Colonic mucosa (tissue), 4 donors: ENCODE measurements at regions of chr19 and their contacts with region 1.

Region 1: GRCh38 chr19:33143897-33144405 is 12.0 kb downstream of the WDR88 start:
- DNase-seq: peak; percentile 66
- H3K4me3 ChIP-seq: peak overlapping the region; percentile 4
- H3K27ac ChIP-seq: no peak overlapping the region
- H3K4me1 ChIP-seq: no peaks in the 10 kb centered on the region
- H3K27me3 ChIP-seq: no peaks in the 10 kb centered on the region
- CTCF ChIP-seq: peak; percentile 94

Region 2: DNA sequence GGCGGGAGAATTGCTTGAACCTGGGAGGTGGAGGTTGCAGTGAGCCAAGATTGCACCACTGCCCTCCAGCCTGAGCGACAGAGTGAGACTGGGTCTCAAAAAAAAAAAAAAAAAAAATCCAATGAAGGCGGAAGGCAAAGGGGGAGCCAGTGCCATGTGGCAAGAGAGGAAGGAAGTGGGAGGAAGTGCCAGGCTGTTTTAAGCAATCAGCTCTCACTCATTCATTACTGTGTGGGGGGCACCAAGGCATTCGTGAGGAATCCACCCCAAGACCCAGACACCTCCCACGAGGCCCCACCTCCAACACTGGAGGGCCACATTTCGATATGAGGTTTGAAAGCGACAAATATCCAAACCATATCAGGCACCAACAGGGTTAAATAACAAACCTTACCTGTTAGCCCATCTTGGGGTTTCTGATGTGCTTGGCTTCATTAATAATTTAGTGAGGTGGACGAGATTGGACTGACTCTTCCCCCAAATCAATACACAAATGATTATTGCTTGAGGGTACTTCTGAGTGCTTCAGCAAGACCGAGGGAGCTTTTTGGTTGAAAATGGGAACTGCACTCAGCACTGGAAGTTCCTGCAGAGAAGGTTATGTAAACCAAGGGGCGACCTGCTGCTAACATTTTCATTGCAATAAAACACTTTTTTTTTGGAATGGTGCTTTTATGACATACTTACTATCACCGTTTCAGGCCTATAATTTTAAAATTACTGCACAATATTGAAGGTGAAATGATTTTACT is 42.7 kb after region 1 on chr19:
- intact Hi-C with region 1: loop called (anchors 2 kb)
- DNase-seq: no peak
- H3K4me3 ChIP-seq: no peak overlapping the region
- H3K27ac ChIP-seq: no peak overlapping the region
- H3K4me1 ChIP-seq: no peaks in the 10 kb centered on the region
- H3K27me3 ChIP-seq: no peaks in the 10 kb centered on the region
- CTCF ChIP-seq: no peak

Region 3: DNA sequence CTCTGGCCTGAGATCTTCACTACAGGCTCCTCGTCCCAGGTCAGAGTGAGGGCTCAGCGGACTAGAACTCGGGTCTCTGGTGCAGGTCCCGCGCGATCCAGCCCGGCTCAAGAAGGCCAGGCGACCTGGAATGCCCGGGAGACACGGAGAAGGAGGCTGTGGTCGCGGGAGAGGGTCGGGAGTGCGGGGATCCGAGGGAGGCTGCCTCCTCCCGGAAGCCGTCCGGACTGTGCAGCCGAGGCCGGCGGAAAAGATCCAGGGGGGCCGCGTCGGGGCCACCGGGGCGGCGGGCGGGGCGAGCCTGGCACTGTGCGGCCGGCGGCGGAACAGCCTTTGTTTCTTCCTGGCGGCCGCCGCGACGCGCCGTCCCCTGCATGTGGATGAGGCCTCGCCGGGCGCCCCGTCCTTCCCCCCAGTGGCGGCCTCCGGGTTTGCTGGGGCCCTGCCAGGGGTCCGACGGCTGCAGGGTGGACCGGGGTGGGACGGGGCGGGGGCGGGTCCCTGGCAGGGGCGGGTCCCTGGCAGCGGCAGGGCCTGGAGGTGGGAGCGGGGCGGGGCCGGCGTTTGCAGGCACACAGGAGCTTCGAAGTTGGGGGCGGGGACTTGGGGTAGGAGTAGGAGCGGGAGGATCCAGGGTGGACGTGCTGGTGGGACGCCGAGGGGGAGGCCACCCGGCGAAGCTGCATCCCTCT is 82.7 kb after region 1 on chr19:
- intact Hi-C with region 1: no loop called
- DNase-seq: peak; percentile 43
- H3K4me3 ChIP-seq: peak overlapping the region; percentile 30
- H3K27ac ChIP-seq: no peak overlapping the region
- H3K4me1 ChIP-seq: peaks cover 4% of the 10 kb centered on the region
- H3K27me3 ChIP-seq: peaks cover 37% of the 10 kb centered on the region
- CTCF ChIP-seq: no peak